ENCODE measurements at regions of chr1 and their contacts with region 1.

Region 1: GRCh38 chr1:19918057-19918456 is 5.4 kb downstream of the PLA2G2E start:
- DNase-seq: peak; percentile 85
- ATAC-seq: peak; percentile 49
- H3K4me3 ChIP-seq: no peak overlapping the region
- H3K4me3 Mint-ChIP-seq: no peak overlapping the region
- H3K27ac ChIP-seq: no peak overlapping the region
- H3K27ac Mint-ChIP-seq: no peak overlapping the region
- H3K4me1 ChIP-seq: no peaks in the 10 kb centered on the region
- H3K4me1 Mint-ChIP-seq: peaks cover 4% of the 10 kb centered on the region
- H3K27me3 ChIP-seq: peaks cover 0 to 5% (median 0%) of the 10 kb centered on the region in 4 experiments
- H3K27me3 Mint-ChIP-seq: peaks cover 4% of the 10 kb centered on the region
- CTCF ChIP-seq: peak; percentile 86

Region 2: GRCh38 chr1:19462781-19463503 is 455.1 kb before region 1 on chr1:
- CTCF ChIA-PET with region 1: no interaction called
- POLR2A ChIA-PET with region 1: no interaction called
- intact Hi-C with region 1: no loop called
- DNase-seq: peak; percentile 80
- ATAC-seq: peak; percentile 83
- H3K4me3 ChIP-seq: peak overlapping the region in 4 of 5 experiments; percentile 16 to 29 (median 23)
- H3K4me3 Mint-ChIP-seq: peak overlapping the region; percentile 78
- H3K27ac ChIP-seq: peak overlapping the region; percentile 76 to 96
- H3K27ac Mint-ChIP-seq: peak overlapping the region; percentile 88
- H3K4me1 ChIP-seq: peaks cover 82 to 95% of the 10 kb centered on the region in 2 donors
- H3K4me1 Mint-ChIP-seq: peaks cover 85% of the 10 kb centered on the region
- H3K27me3 ChIP-seq: no peaks in the 10 kb centered on the region
- H3K27me3 Mint-ChIP-seq: no peaks in the 10 kb centered on the region
- CTCF ChIP-seq: no peak

Region 3: DNA sequence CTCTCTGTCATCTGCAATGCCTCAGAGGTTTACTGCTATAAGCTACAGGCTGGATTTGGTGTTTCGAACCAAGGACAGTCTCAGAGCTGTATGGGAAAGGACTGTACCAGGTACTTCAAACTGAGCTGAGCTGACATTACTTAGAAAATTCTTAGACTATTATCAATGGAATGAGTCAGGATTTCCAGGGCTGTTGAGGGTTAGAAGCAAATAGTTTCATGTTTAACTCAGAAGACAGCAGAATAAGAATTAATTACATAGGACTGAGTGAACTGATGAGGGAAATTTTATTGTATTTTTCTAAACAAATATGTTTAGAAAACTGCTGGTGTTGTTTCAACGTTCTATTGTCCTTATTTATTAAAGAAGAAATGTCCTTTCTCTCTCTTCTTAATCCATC is 358.4 kb before region 1 on chr1:
- CTCF ChIA-PET with region 1: no interaction called
- POLR2A ChIA-PET with region 1: no interaction called
- intact Hi-C with region 1: no loop called
- DNase-seq: no peak
- ATAC-seq: no peak
- H3K4me3 ChIP-seq: no peak overlapping the region
- H3K4me3 Mint-ChIP-seq: no peak overlapping the region
- H3K27ac ChIP-seq: no peak overlapping the region
- H3K27ac Mint-ChIP-seq: no peak overlapping the region
- H3K4me1 ChIP-seq: no peaks in the 10 kb centered on the region
- H3K4me1 Mint-ChIP-seq: no peaks in the 10 kb centered on the region
- H3K27me3 ChIP-seq: peaks cover 0 to 14% (median 0%) of the 10 kb centered on the region in 4 experiments
- H3K27me3 Mint-ChIP-seq: peaks cover 8% of the 10 kb centered on the region
- CTCF ChIP-seq: no peak

Region 4: DNA sequence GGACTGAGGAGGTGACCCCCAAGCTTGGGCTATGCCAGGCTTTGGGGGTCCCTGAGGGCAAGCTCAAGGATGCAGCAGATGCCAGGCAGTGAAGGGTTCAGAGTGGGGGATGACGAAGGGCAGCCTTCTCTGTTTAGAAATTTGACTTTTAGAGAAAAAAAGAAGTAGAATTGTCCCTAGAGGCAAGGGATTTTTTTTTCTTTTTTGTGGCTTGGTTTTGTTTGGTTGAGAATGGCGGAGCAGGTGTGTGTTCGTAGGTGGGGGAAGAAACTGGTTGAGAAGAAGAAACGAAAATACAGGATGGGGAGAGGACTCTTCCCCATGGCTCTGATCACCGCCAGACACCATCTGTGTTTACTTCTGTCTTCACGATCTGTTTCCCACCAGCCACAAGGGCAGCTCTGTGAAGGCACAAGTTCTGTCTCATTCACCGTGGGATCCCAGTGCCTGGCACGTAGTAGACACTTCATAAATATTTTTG is 160.2 kb after region 1 on chr1:
- CTCF ChIA-PET with region 1: interaction called, 10 read pairs
- POLR2A ChIA-PET with region 1: no interaction called
- intact Hi-C with region 1: no loop called
- DNase-seq: peak; percentile 81
- ATAC-seq: peak; percentile 87
- H3K4me3 ChIP-seq: peak overlapping the region in 3 of 5 experiments; percentile 16 to 37 (median 25)
- H3K4me3 Mint-ChIP-seq: peak overlapping the region; percentile 57
- H3K27ac ChIP-seq: peak overlapping the region; percentile 68 to 83
- H3K27ac Mint-ChIP-seq: peak overlapping the region; percentile 78
- H3K4me1 ChIP-seq: peaks cover 88% of the 10 kb centered on the region in 2 donors
- H3K4me1 Mint-ChIP-seq: peaks cover 88% of the 10 kb centered on the region
- H3K27me3 ChIP-seq: no peaks in the 10 kb centered on the region
- H3K27me3 Mint-ChIP-seq: no peaks in the 10 kb centered on the region
- CTCF ChIP-seq: no peak

Region 5: GRCh38 chr1:20100632-20101355 is 182.7 kb after region 1 on chr1:
- CTCF ChIA-PET with region 1: interaction called, 11 read pairs
- POLR2A ChIA-PET with region 1: no interaction called
- intact Hi-C with region 1: loop called (anchors 1 kb)
- DNase-seq: peak; percentile 74
- ATAC-seq: peak; percentile 94
- H3K4me3 ChIP-seq: no peak overlapping the region
- H3K4me3 Mint-ChIP-seq: no peak overlapping the region
- H3K27ac ChIP-seq: no peak overlapping the region
- H3K27ac Mint-ChIP-seq: no peak overlapping the region
- H3K4me1 ChIP-seq: peaks cover 5 to 8% of the 10 kb centered on the region in 2 donors
- H3K4me1 Mint-ChIP-seq: peaks cover 3% of the 10 kb centered on the region
- H3K27me3 ChIP-seq: no peaks in the 10 kb centered on the region
- H3K27me3 Mint-ChIP-seq: peaks cover 3% of the 10 kb centered on the region
- CTCF ChIP-seq: peak; percentile 80

Region 6: GRCh38 chr1:20158358-20159067 is 240.5 kb after region 1 on chr1:
- CTCF ChIA-PET with region 1: interaction called, 126 read pairs
- POLR2A ChIA-PET with region 1: no interaction called
- intact Hi-C with region 1: no loop called
- DNase-seq: no peak
- ATAC-seq: no peak
- H3K4me3 ChIP-seq: no peak overlapping the region
- H3K4me3 Mint-ChIP-seq: no peak overlapping the region
- H3K27ac ChIP-seq: no peak overlapping the region
- H3K27ac Mint-ChIP-seq: no peak overlapping the region
- H3K4me1 ChIP-seq: peaks cover 0 to 5% of the 10 kb centered on the region in 2 donors
- H3K4me1 Mint-ChIP-seq: peaks cover 11% of the 10 kb centered on the region
- H3K27me3 ChIP-seq: no peaks in the 10 kb centered on the region
- H3K27me3 Mint-ChIP-seq: no peaks in the 10 kb centered on the region
- CTCF ChIP-seq: no peak

Region 7: GRCh38 chr1:20212685-20213331 is 294.8 kb after region 1 on chr1:
- CTCF ChIA-PET with region 1: interaction called, 5 read pairs
- POLR2A ChIA-PET with region 1: no interaction called
- intact Hi-C with region 1: loop called (anchors 5 kb)
- DNase-seq: peak; percentile 77
- ATAC-seq: peak; percentile 90
- H3K4me3 ChIP-seq: peak overlapping the region in 4 of 5 experiments; percentile 6 to 44 (median 28)
- H3K4me3 Mint-ChIP-seq: peak overlapping the region; percentile 74
- H3K27ac ChIP-seq: no peak overlapping the region
- H3K27ac Mint-ChIP-seq: peak overlapping the region; percentile 53
- H3K4me1 ChIP-seq: peaks cover 10 to 16% of the 10 kb centered on the region in 2 donors
- H3K4me1 Mint-ChIP-seq: peaks cover 15% of the 10 kb centered on the region
- H3K27me3 ChIP-seq: peaks cover 0 to 38% (median 2%) of the 10 kb centered on the region in 4 experiments
- H3K27me3 Mint-ChIP-seq: peaks cover 14% of the 10 kb centered on the region
- CTCF ChIP-seq: peak; percentile 94

Measured in B cell (primary cell).